ENCODE measurements at regions of chr10 and their contacts with region 1.

Region 1: GRCh38 chr10:115129752-115130151 is 36.6 kb downstream of the ATRNL1 start:
- DNase-seq: no peak
- H3K4me3 ChIP-seq: no peak overlapping the region
- H3K27ac ChIP-seq: no peak overlapping the region
- H3K4me1 ChIP-seq: no peaks in the 10 kb centered on the region
- H3K27me3 ChIP-seq: no peaks in the 10 kb centered on the region
- CTCF ChIP-seq: peak; percentile 35 to 37 (median 37)
- EP300 ChIP-seq: no peak
- POLR2A ChIP-seq: no peak

Region 2: DNA sequence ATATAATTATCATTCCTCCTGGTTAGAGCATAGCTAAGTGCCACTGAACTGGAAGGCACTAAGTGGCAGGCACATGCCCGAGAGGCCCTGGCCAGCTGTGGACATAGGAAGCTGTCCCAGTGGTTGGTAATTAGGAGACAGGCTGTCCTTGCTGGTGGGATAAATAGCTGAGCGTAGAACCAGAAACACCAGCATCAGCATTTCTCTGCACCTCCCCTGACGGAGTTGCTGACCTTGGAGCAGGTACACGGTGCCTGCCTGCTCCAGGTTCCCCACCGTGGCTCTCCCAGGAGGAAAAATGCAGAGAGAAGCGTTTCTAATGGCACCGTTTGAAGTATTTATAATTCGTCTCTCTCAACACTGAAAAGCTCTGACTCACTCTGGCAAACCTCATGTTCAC is 466.1 kb before region 1 on chr10:
- intact Hi-C with region 1: no loop called
- DNase-seq: no peak
- H3K4me3 ChIP-seq: no peak overlapping the region
- H3K27ac ChIP-seq: no peak overlapping the region
- H3K4me1 ChIP-seq: peaks cover 0 to 55% (median 10%) of the 10 kb centered on the region in 4 donors
- H3K27me3 ChIP-seq: no peaks in the 10 kb centered on the region
- CTCF ChIP-seq: no peak
- EP300 ChIP-seq: no peak
- POLR2A ChIP-seq: no peak

Region 3: DNA sequence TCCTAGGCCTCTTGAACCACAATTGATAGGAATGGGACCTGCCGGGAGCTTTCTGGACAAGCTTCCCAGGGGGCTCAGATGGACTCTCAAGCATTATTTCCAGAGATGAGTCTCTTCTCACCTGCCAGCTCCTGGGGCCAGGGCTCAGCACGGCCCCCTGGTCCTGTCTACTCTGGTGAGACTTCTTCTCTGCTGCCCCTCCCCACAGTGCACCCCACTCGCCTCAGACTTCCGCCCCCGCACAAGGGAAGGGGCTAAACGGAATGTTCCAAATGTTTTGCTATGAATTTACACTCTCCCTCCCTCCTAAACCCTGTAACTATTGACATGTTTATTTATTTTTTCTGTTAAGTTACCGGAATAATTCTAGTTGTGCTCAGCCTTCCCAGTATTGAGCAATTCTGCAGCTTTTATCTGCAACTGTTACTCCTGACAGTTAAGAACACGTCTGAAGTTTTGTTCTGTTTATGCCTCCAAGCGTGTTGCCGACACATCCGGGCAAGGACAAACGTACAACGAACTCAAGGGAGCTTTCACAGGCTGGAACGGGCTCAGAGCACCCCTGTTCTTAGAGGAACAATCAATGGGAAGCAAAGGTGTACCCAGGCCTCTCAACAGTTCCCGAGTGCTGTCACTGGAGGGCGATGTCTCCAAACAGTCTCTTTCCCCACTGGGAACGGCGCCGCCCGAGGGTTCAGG is 253.0 kb before region 1 on chr10:
- intact Hi-C with region 1: loop called (anchors 5 kb)
- DNase-seq: no peak
- H3K4me3 ChIP-seq: no peak overlapping the region
- H3K27ac ChIP-seq: no peak overlapping the region
- H3K4me1 ChIP-seq: peaks cover 0 to 22% (median 8%) of the 10 kb centered on the region in 4 donors
- H3K27me3 ChIP-seq: peaks cover 0 to 12% (median 0%) of the 10 kb centered on the region in 4 donors
- CTCF ChIP-seq: peak; percentile 61 to 73 (median 61)
- EP300 ChIP-seq: no peak
- POLR2A ChIP-seq: no peak

Region 4: DNA sequence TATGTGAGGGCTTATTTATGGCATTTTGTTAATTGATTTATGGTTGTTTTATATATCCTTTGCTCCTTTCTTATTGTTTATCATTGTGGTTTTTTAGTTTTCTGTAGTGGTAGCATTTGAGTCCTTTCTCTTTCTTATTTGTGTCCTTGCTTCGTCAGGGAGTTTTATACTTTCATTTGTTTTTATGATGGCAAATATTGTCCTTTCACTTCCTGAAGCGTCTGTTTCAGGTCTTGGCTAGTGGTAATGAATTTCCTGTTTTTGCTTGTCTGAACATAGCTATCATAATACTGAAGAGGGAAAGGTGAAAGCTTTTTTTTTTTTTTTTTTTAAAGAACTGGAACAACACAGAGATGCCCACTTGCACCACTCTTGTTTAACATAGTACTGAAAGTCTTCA is 191.6 kb after region 1 on chr10:
- intact Hi-C with region 1: no loop called
- DNase-seq: no peak
- H3K4me3 ChIP-seq: no peak overlapping the region
- H3K27ac ChIP-seq: no peak overlapping the region
- H3K4me1 ChIP-seq: no peaks in the 10 kb centered on the region
- H3K27me3 ChIP-seq: no peaks in the 10 kb centered on the region
- CTCF ChIP-seq: no peak
- EP300 ChIP-seq: no peak
- POLR2A ChIP-seq: no peak